Naive thymus-derived CD4-positive, alpha-beta T cell (primary cell): ENCODE measurements at regions of chr6 and their contacts with region 1.

Region 1: GRCh38 chr6:17987576-17988421 is at the start of gene KIF13A:
- DNase-seq: peak in 6 of 9 donors; percentile 4 to 53 (median 12)
- ATAC-seq: peak; percentile 74
- H3K4me3 ChIP-seq: peak within 1 kb of the TSS; percentile 52
- H3K4me3 Mint-ChIP-seq: peak within 1 kb of the TSS; percentile 86 to 97 (median 90)
- H3K27ac ChIP-seq: no peak within 1 kb of the TSS
- H3K27ac Mint-ChIP-seq: peak within 1 kb of the TSS in 2 of 9 donors; percentile 4 to 55
- H3K4me1 ChIP-seq: peaks cover 6 to 7% of the 10 kb centered on the region in 2 donors
- H3K4me1 Mint-ChIP-seq: peaks cover 5 to 25% (median 12%) of the 10 kb centered on the region in 7 donors
- H3K27me3 ChIP-seq: peaks cover 0 to 5% of the 10 kb centered on the region in 2 donors
- H3K27me3 Mint-ChIP-seq: peaks cover 35 to 67% (median 46%) of the 10 kb centered on the region in 5 donors
- total RNA-seq, gene KIF13A: 0.05 to 21.0 (median 0.97) TPM

Region 2: GRCh38 chr6:18004256-18004985 is 16.6 kb after region 1 on chr6:
- CTCF ChIA-PET with region 1: no interaction called
- POLR2A ChIA-PET with region 1: no interaction called
- intact Hi-C with region 1: no loop called
- DNase-seq: no peak
- ATAC-seq: no peak
- H3K4me3 ChIP-seq: no peak overlapping the region
- H3K4me3 Mint-ChIP-seq: no peak overlapping the region
- H3K27ac ChIP-seq: no peak overlapping the region
- H3K27ac Mint-ChIP-seq: no peak overlapping the region
- H3K4me1 ChIP-seq: no peaks in the 10 kb centered on the region
- H3K4me1 Mint-ChIP-seq: no peaks in the 10 kb centered on the region
- H3K27me3 ChIP-seq: no peaks in the 10 kb centered on the region
- H3K27me3 Mint-ChIP-seq: peaks cover 3 to 16% (median 5%) of the 10 kb centered on the region in 5 donors

Region 3: DNA sequence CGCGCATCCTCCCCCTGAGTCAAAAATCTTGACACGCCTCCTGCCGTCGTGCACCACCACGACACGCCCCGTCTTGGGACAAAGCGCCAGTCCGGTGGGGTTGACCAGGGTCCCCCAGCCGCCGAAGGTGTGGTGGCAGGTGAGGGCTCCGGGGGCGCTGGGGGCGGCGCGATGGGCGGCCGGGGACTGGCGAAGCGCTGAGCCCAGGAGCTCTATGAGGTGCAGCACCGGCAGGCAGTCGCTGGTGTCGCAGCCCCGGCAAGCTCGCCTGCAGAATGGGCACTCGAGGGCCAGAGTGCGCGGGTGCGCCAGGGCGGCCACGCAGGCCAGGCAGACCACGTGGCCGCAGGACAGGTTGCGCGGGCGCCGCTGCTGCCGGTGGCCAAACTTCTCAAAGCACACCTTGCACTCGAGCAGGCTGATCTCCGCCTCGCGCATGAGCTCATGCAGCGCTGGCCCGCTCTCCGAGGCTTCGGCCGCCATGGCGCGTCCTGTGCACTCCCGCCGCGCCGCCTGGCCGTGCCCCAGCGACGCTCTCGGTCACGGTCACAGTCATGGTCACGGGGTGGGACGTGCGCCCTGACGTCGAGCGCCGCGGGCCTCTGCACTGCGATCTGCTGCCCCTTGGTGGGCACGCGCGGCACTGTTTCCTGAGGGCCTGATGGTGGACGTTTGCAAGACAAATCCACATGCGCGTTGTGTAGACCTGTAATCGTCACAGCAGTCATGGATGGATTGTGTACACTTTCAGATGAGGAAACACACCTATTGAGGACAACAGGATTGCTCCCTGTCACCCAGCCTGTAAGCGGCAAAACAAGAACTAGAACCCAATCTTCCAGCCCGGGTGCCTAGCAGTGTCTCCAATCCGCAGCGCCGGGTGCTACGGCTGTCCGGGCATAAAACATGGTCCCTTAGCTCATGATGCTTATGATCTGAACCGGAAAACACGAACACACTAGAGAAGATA is 134.6 kb after region 1 on chr6 and contains the start of gene NHLRC1:
- CTCF ChIA-PET with region 1: no interaction called
- POLR2A ChIA-PET with region 1: no interaction called
- intact Hi-C with region 1: loop called in 1 of 2 experiments (anchors 10 kb)
- DNase-seq: peak; percentile 43 to 68 (median 65)
- ATAC-seq: peak; percentile 100
- H3K4me3 ChIP-seq: peak within 1 kb of the TSS; percentile 63
- H3K4me3 Mint-ChIP-seq: peak within 1 kb of the TSS; percentile 81 to 90 (median 87)
- H3K27ac ChIP-seq: no peak within 1 kb of the TSS
- H3K27ac Mint-ChIP-seq: peak within 1 kb of the TSS; percentile 6 to 87 (median 53)
- H3K4me1 ChIP-seq: peaks cover 5 to 8% of the 10 kb centered on the region in 2 donors
- H3K4me1 Mint-ChIP-seq: peaks cover 0 to 15% (median 8%) of the 10 kb centered on the region in 7 donors
- H3K27me3 ChIP-seq: no peaks in the 10 kb centered on the region
- H3K27me3 Mint-ChIP-seq: peaks cover 0 to 65% (median 7%) of the 10 kb centered on the region in 5 donors
- total RNA-seq, gene NHLRC1: 0.39 to 1.4 (median 0.61) TPM